KBM-7 (cell line): ENCODE measurements at regions of chr7 and their contacts with region 1.

Region 1: GRCh38 chr7:148962823-148963582 is 65.3 kb downstream of the PDIA4 start:
- DNase-seq: peak; percentile 87

Region 2: GRCh38 chr7:148262721-148263229 is 700.2 kb before region 1 on chr7:
- in situ Hi-C with region 1: loop called (anchors 25 kb)
- DNase-seq: peak; percentile 67

Region 3: DNA sequence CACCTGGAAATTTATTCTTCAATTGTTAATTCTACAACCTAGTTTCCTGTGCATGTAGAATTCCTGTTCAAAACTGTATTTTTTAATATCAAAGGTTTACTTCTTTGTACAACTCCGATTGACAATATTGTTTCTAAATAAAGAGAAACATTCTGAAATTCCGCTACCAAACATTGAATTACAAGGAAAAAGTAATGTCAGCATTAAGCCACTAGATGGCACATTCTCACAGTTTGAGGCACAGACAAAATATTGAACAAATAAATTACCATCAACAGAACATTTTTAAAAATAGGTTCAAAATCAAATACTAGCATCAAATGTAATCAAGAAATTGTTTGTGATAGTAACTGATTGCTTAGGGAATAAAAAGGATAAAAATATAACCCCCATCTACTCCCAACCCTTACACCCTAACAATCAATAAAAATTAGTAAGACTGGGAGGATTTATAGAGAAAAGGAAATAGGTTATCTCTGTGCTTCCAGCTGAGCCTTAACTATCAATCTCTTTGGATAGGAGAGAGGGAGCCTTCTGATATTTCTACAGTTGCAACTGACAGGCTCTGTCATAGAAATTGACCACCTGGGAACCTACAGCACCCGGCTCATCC is 459.0 kb before region 1 on chr7:
- in situ Hi-C with region 1: loop called (anchors 25 kb)
- DNase-seq: peak; percentile 56

Region 4: DNA sequence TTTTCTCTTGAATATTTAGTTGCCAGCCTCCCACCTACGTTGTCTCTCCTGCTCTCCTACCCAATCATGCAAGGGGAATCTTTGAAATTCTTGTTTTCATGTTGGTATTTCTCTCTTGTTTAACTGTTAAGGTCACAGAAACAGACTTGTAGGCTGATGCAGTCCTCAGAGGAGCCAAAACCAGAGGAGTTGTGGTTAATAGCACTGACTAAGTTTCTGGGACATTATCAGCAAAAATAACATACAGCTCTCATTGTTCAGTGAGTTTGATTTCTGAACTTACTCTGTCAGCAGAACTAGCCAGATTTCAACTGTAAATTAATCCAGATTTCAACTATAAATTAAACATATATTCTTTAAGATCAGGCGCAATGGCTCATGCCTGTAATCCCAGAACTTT is 275.4 kb before region 1 on chr7:
- in situ Hi-C with region 1: no loop called
- DNase-seq: no peak

Region 5: DNA sequence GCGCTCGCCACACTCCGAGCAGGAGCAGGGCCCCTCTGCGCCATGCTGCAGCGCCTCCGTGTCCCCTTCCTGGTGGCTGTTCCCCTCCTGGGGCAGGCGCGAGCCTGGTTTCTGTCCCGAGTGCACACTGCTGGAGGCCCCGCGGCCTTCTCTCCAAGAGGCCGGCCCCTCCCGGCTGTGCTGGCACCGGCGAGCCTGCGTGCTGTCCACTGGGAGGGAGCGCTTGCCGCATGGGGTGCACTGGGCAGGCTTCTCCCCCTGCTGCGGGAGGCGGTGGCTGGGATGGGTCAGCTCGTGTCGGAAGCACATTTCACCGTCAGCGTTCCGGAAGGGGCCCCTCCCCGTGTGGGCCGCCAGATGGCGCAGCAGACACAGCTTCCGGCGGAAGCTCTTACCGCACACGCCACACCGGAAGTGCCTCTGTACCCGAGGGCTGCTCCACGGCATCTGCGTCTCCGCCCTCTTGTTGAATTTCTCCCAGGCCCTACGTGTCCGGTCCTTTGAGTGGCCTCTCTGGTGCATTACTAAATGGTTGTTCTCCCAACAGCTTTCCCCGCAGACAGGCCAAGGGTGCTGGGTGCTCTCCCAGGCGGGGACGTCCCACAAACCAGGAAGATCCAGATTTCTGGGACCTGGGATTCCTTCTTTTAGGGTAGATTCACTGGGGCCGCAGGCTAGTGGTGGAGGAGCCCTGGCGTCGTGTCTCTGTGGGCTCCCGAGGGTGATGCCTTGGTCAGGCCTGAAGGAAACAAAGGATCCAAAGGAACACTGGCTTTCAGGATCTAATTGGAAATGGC is 108.8 kb after region 1 on chr7:
- in situ Hi-C with region 1: no loop called
- DNase-seq: no peak